Activated naive CD4-positive, alpha-beta T cell treated with anti-CD3 and anti-CD28 coated beads for 36 hours (primary cell): ENCODE measurements at regions of chr11 and their contacts with region 1.

Region 1: GRCh38 chr11:118401151-118401878 is at the start of gene ATP5MG:
- DNase-seq: peak; percentile 97
- H3K4me3 Mint-ChIP-seq: peak within 1 kb of the TSS; percentile 95
- H3K27ac Mint-ChIP-seq: peak within 1 kb of the TSS; percentile 98
- H3K4me1 Mint-ChIP-seq: peaks cover 58% of the 10 kb centered on the region
- H3K27me3 Mint-ChIP-seq: no peaks in the 10 kb centered on the region
- total RNA-seq, gene ATP5MG: 279 to 284 TPM

Region 2: GRCh38 chr11:118359295-118359958 is 41.9 kb before region 1 on chr11 and contains the start of gene UBE4A:
- CTCF ChIA-PET with region 1: no interaction called
- intact Hi-C with region 1: loop called (anchors 1 kb)
- DNase-seq: peak; percentile 100
- H3K4me3 Mint-ChIP-seq: peak within 1 kb of the TSS; percentile 99
- H3K27ac Mint-ChIP-seq: peak within 1 kb of the TSS; percentile 91
- H3K4me1 Mint-ChIP-seq: peaks cover 52% of the 10 kb centered on the region
- H3K27me3 Mint-ChIP-seq: no peaks in the 10 kb centered on the region
- total RNA-seq, gene UBE4A: 35.3 to 35.7 TPM

Region 3: DNA sequence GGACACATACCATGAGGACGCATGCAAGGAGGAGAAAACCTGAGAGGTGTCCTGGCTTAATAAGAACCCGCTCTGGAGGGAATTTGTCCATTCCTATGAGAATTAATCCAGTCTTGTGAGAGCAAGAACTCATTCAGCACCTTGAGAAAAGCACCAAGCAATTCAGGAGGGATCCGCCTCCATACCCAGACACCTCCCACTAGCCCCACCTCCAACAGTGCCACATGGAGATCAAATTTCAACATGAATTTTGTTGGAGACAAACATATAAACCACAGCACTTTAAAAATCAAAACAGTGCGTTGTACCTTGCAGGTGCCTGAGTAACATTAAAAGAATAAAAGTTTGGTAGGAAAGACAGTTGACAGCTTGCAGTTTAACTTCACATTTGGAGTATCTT is 30.5 kb before region 1 on chr11:
- CTCF ChIA-PET with region 1: no interaction called
- intact Hi-C with region 1: no loop called
- DNase-seq: no peak
- H3K4me3 Mint-ChIP-seq: no peak overlapping the region
- H3K27ac Mint-ChIP-seq: no peak overlapping the region
- H3K4me1 Mint-ChIP-seq: peaks cover 2% of the 10 kb centered on the region
- H3K27me3 Mint-ChIP-seq: no peaks in the 10 kb centered on the region

Region 4: DNA sequence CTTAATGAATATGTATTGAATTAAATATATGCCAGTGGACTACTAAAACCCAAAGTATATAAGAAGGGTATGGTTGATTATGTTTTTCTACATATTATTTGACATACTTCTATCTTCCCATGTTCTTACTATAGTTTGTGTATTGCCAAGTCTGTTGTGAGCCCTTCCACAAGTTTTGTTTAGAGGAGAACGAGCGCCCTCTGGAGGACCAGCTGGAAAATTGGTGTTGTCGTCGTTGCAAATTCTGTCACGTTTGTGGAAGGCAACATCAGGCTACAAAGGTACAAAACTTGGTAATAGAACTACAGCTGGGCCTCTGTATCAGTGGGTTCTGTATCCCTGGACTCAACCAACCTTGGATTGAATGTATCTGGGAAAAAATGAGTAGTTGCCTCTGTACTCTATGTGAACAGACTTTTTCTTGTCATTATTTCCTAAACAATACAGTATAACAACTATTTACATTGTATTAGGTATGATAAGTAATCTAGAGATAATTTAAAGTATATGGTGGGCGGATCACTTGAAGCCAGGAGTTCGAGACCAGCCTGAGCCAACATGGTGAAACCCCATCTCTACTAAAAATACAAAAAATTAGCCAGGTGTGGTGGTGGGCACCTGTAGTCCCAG is 87.3 kb after region 1 on chr11:
- CTCF ChIA-PET with region 1: interaction called, 8 read pairs
- intact Hi-C with region 1: loop called (anchors 1 kb)
- DNase-seq: peak; percentile 92
- H3K4me3 Mint-ChIP-seq: no peak overlapping the region
- H3K27ac Mint-ChIP-seq: no peak overlapping the region
- H3K4me1 Mint-ChIP-seq: peaks cover 9% of the 10 kb centered on the region
- H3K27me3 Mint-ChIP-seq: no peaks in the 10 kb centered on the region

Region 5: DNA sequence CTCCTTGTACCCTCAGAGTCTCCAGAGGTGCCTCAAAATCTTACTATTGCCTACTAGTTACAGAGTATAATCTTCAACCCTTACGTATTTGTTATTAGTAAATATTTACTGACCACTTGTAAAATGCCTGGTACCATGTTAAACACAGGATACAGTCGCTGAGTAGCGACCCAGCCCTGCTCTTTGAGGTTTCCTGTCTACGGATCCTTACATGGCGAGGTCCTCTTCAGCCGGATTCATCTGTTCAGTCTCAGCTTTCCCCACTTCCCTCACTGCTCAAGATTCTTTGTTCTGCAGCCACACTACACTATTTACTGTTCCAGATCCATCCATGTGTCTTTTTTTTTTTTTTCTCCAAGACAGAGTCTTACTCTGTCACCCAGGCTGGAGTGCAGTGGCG is 112.8 kb after region 1 on chr11:
- CTCF ChIA-PET with region 1: no interaction called
- intact Hi-C with region 1: no loop called
- DNase-seq: no peak
- H3K4me3 Mint-ChIP-seq: no peak overlapping the region
- H3K27ac Mint-ChIP-seq: peak overlapping the region; percentile 55
- H3K4me1 Mint-ChIP-seq: peaks cover 5% of the 10 kb centered on the region
- H3K27me3 Mint-ChIP-seq: no peaks in the 10 kb centered on the region

Region 6: DNA sequence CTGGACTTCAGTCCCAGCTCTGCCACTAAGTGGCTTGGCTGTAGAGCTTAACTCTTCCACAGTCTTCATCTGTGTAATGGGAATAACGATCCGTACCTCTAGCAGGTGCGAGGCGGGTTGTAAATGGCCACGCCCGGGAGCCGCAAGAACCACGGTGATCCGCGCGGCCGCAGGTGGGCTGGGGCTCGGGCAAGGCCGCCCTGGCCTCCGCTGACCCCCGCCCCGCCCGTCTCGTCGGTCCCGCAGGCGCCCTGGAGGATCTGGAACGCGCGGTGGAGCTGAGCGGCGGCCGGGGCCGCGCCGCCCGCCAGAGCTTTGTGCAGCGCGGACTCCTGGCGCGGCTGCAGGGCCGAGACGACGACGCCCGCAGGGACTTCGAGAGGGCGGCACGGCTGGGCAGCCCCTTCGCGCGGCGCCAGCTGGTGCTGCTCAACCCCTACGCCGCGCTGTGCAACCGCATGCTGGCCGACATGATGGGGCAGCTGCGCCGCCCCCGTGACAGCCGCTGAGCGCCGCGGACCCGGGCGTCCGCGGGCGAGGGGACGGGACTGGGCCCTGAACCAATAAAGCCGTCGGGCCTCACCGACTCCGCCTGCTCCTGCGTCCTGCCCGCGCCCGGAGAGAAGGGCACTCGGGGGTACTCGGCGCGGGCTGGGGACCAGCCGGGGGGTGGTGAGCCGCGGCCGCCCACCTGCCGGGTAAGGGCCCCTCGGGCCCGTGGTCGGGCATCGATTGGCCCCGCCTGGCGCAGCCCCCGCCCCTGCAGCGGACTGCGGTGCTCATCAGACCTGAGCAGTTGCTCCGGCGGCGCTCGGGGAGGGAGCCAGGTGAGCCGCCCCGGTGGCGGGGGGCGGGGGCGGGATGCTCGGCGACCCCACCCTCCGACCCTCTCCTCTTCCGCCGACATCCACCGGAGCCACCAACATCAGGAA is 129.4 kb after region 1 on chr11 and contains the start of gene TMEM25:
- CTCF ChIA-PET with region 1: no interaction called
- intact Hi-C with region 1: loop called (anchors 1 kb)
- DNase-seq: peak; percentile 75
- H3K4me3 Mint-ChIP-seq: peak within 1 kb of the TSS; percentile 95
- H3K27ac Mint-ChIP-seq: no peak within 1 kb of the TSS
- H3K4me1 Mint-ChIP-seq: peaks cover 30% of the 10 kb centered on the region
- H3K27me3 Mint-ChIP-seq: no peaks in the 10 kb centered on the region
- total RNA-seq, gene TMEM25: 13.3 to 14.1 TPM